Endothelial cell of umbilical vein (primary cell): ENCODE measurements at regions of chr19 and their contacts with region 1.

Region 1: DNA sequence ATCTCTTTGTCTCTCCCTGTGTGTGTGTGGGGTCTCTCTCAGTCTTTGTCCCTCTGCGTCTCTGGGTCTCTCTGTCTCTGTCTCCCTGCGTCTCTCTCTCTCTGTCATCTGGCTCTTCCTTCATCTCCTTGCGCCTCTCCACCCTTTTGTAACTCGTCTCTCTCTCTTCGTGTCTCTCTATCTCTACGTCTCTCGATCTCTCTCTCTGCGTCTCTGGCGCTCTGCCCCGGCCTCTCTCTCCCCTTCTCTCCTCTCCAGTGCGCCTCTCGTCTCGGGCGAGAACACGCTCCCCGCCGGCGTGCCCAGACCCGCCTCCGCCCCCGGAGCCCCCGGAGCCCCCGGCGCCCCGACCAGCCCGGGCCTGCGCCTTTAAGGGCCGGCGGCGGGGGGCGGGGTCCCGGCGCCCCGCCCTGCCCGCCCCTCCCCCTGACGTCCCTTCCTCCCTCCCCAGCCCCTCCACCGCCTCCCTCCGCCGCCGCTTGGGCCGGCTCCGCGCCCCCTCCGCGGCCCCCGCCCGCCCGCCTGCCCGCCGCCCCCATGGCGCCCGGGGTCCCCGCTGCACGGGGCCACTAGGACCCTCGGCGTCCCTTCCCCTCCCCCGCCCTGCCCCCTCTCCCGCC is at the start of gene MARK4:
- DNase-seq: peak; percentile 44
- H3K4me3 ChIP-seq: peak within 1 kb of the TSS; percentile 70 to 94 (median 86)
- H3K27ac ChIP-seq: peak within 1 kb of the TSS; percentile 20
- H3K4me1 ChIP-seq: peaks cover 13% of the 10 kb centered on the region
- H3K27me3 ChIP-seq: no peaks in the 10 kb centered on the region
- CTCF ChIP-seq: no peak
- POLR2A ChIP-seq: peak; percentile 36
- total RNA-seq, gene MARK4: 50.0 and 51.6 TPM in 2 replicates

Region 2: GRCh38 chr19:45161738-45162607 is 89.0 kb before region 1 on chr19:
- CTCF ChIA-PET with region 1: interaction called, 12 read pairs
- POLR2A ChIA-PET with region 1: no interaction called
- dilution Hi-C with region 1: no loop called
- intact Hi-C with region 1: loop called (anchors 1 kb)
- DNase-seq: peak; percentile 50
- H3K4me3 ChIP-seq: no peak overlapping the region
- H3K27ac ChIP-seq: no peak overlapping the region
- H3K4me1 ChIP-seq: peaks cover 6% of the 10 kb centered on the region
- H3K27me3 ChIP-seq: no peaks in the 10 kb centered on the region
- CTCF ChIP-seq: peak; percentile 61 to 90
- POLR2A ChIP-seq: no peak

Region 3: GRCh38 chr19:45178262-45179071 is 72.5 kb before region 1 on chr19 and contains the start of gene BLOC1S3:
- CTCF ChIA-PET with region 1: interaction called, 10 read pairs
- POLR2A ChIA-PET with region 1: no interaction called
- dilution Hi-C with region 1: no loop called
- intact Hi-C with region 1: no loop called
- DNase-seq: peak; percentile 100
- H3K4me3 ChIP-seq: peak within 1 kb of the TSS; percentile 68 to 91 (median 85)
- H3K27ac ChIP-seq: peak within 1 kb of the TSS; percentile 80
- H3K4me1 ChIP-seq: peaks cover 13% of the 10 kb centered on the region
- H3K27me3 ChIP-seq: no peaks in the 10 kb centered on the region
- CTCF ChIP-seq: peak; percentile 22 to 53
- POLR2A ChIP-seq: peak; percentile 58
- total RNA-seq, gene BLOC1S3: 11.7 and 17.4 TPM in 2 replicates

Region 4: DNA sequence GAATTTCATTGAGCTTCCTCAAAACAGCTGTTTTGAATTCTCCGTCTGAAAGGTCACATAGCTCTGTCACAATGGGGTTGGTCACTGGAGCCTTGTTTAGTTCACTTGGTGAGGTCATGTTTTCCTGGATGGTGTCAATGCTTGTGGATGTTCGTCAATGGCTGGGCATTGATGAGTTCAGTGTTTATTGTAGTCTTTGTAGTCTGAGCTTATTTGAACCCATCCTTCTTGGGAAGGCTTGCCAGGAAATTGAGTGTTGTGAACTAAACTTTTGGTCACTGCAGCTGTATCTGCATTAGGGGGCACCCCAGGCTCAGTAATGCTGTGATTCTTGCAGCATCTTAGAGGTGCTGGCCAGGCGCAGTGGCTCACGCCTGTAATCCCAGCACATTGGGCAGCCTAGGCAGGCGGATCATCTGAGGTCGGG is 50.4 kb before region 1 on chr19:
- CTCF ChIA-PET with region 1: interaction called, 102 read pairs
- POLR2A ChIA-PET with region 1: no interaction called
- dilution Hi-C with region 1: no loop called
- intact Hi-C with region 1: loop called (anchors 1 kb)
- DNase-seq: peak; percentile 73
- H3K4me3 ChIP-seq: no peak overlapping the region
- H3K27ac ChIP-seq: no peak overlapping the region
- H3K4me1 ChIP-seq: peaks cover 4% of the 10 kb centered on the region
- H3K27me3 ChIP-seq: no peaks in the 10 kb centered on the region
- CTCF ChIP-seq: peak; percentile 52 to 60
- POLR2A ChIP-seq: no peak